CD8-positive, alpha-beta T cell (primary cell): ENCODE measurements at regions of chr5 and their contacts with region 1.

Region 1: DNA sequence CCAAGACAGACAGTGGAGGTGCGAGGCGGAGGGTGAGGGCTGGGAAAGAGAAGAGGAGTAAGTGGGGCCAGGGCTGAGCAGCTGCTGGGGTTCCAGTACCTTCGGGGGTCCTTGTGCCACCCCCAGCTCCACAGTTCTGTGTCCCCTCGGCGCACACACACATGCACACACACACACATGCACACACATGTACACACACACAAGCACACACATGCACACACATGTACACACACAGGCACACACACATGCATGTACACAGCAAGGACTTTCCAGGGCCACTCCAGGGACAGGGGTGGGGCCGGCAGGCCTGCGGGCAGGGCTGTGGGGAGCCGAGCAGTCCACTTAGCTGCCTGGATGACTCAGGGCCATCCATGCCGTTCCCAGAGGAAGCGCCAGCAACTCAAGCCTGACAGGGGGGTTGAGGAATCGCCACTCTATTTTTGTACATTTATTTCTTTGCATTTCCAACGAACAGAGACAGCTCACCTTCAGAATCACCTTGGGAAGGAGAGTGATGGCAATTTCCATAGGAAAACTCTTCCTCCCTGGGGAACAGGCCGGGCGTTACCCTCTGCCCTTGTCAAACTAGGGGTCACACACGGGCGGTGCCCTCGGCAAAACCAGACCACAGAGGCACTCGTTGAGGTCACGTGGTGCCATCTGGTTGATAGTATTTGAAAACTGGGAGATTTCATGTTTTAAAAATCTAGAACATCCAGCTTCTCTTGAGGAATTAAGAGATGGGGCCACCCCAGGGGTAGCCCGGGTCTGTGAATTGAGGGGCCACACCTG is 135.7 kb downstream of the ADAMTS2 start:
- DNase-seq: no peak
- ATAC-seq: no peak
- H3K4me3 ChIP-seq: no peak overlapping the region
- H3K4me3 Mint-ChIP-seq: no peak overlapping the region
- H3K27ac ChIP-seq: no peak overlapping the region
- H3K27ac Mint-ChIP-seq: no peak overlapping the region
- H3K4me1 ChIP-seq: no peaks in the 10 kb centered on the region
- H3K4me1 Mint-ChIP-seq: no peaks in the 10 kb centered on the region
- H3K27me3 ChIP-seq: no peaks in the 10 kb centered on the region
- H3K27me3 Mint-ChIP-seq: peaks cover 6% of the 10 kb centered on the region
- CTCF ChIP-seq: no peak

Region 2: DNA sequence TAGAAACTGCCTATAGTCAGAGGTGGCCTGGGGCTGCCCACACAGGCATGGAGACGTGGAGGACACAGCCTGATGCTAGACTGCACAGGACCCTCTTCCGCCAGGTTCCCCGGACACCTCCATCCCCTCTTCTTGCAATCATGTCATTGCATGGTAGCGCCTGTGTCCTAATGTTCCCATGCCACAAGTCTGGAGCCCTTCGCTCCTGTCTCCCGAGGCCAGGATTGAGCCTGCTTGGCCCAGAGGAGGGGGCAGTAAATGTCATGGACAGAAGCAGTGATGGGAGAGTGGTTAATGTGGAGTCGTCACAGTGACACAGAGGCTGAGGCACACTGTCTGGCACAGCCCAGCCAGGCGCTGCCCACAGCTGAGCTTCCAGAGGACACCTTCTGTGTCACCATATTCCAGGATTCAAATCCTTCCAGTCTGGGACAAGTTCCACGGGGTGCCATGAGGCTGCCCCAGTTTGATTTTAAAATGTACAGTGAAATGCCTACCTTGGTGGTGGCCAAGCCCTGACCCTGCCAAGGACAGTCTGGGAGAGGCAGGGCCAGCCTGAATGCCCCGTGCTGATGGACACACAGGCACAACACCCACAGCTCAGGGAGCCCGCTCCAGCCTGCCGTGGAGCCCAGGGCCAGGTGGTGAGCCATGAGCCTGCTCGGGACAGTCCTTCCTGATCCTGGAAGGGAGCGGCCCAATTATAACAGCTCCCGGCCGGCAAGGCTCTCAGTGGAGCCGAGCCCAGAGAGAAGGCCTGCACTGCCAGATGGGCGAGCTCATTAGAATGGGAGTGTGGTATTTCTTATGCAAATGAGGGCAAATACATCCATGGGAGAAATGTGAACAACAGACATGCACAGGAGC is 241.6 kb after region 1 on chr5:
- CTCF ChIA-PET with region 1: no interaction called
- POLR2A ChIA-PET with region 1: no interaction called
- intact Hi-C with region 1: loop called in 1 of 2 experiments (anchors 5 kb)
- DNase-seq: no peak
- ATAC-seq: no peak
- H3K4me3 ChIP-seq: no peak overlapping the region
- H3K4me3 Mint-ChIP-seq: no peak overlapping the region
- H3K27ac ChIP-seq: no peak overlapping the region
- H3K27ac Mint-ChIP-seq: no peak overlapping the region
- H3K4me1 ChIP-seq: no peaks in the 10 kb centered on the region
- H3K4me1 Mint-ChIP-seq: no peaks in the 10 kb centered on the region
- H3K27me3 ChIP-seq: no peaks in the 10 kb centered on the region
- H3K27me3 Mint-ChIP-seq: peaks cover 10% of the 10 kb centered on the region
- CTCF ChIP-seq: no peak